ENCODE measurements at regions of chr2 and their contacts with region 1.

Region 1: DNA sequence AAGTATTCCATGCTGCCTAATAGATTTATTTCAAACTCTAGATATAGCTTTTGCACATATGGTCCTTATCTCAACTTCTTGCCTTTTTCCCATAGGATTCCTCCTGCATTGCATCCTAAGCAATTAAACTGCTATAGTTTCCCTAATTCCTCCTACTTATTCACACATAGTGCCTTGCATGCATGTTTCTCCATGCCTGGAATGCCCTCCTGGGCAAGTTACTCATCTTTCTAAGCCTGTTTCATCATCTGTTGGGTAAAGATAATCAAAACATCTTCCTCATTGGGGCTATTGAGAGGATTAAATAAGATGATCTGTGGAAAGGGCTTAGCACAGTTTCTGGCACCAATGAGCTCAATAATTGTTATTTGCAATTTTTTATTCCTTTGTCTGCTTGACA is 726.5 kb downstream of the SLC4A3 start:
- DNase-seq: no peak
- ATAC-seq: no peak
- H3K4me3 ChIP-seq: no peak overlapping the region
- H3K27ac ChIP-seq: no peak overlapping the region
- H3K4me1 ChIP-seq: peaks cover 13 to 21% of the 10 kb centered on the region in 2 experiments
- H3K27me3 ChIP-seq: no peaks in the 10 kb centered on the region
- CTCF ChIP-seq: no peak
- POLR2A ChIP-seq: no peak
- RAD21 ChIP-seq: no peak

Region 2: DNA sequence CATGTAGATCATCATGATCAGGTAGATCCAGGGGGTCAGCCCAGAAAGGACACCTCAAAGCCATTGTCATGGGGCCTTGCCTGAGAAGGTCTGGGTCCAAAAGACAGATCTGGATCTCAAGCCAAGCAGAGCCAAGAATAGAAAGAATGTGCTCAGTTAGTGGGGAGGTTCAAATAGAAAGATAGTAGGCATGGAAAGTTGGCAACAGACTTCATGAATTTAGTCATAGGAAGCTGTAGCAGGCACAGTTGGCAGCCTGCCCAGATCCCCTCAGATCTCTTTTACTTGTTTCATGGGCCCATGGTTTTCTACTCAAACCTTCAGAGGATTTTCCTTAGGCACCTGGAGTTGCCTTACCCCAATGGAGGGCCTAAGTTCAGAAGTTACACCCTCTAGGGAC is 40.5 kb after region 1 on chr2:
- CTCF ChIA-PET with region 1: no interaction called
- POLR2A ChIA-PET with region 1: no interaction called
- RAD21 ChIA-PET with region 1: no interaction called
- intact Hi-C with region 1: loop called (anchors 1 kb)
- DNase-seq: no peak
- ATAC-seq: no peak
- H3K4me3 ChIP-seq: no peak overlapping the region
- H3K27ac ChIP-seq: no peak overlapping the region
- H3K4me1 ChIP-seq: peaks cover 0 to 6% of the 10 kb centered on the region in 2 experiments; a peak in 2 of 4 replicates
- H3K27me3 ChIP-seq: no peaks in the 10 kb centered on the region
- CTCF ChIP-seq: no peak
- POLR2A ChIP-seq: no peak
- RAD21 ChIP-seq: no peak

Measured in HCT116 (cell line).